ENCODE measurements at regions of chr12 and their contacts with region 1.

Region 1: DNA sequence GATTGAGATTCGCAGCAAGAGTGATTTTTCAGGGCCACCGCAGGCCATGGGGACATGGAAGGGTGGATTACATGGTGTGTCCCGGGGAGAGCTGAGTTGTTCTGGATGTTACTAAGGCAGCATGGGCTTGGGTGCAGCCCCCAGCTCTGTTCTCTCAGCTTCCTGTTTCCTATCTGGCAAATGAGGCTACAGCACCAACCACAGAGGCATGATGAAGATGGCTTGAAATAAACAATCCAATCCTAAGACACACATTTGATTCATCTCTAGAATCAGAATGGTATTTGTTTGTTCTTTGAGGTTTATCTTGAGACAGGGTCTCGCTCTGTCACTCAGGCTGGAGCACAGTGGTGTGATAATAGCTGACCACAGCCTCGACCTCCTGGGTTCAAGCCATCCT is 21.6 kb downstream of the GLTP start:
- DNase-seq: no peak
- H3K4me3 Mint-ChIP-seq: no peak overlapping the region
- H3K27ac Mint-ChIP-seq: no peak overlapping the region
- H3K4me1 Mint-ChIP-seq: peaks cover 14% of the 10 kb centered on the region
- H3K27me3 Mint-ChIP-seq: no peaks in the 10 kb centered on the region

Region 2: GRCh38 chr12:109782326-109782703 is 76.4 kb before region 1 on chr12:
- CTCF ChIA-PET with region 1: no interaction called
- DNase-seq: no peak
- H3K4me3 Mint-ChIP-seq: no peak overlapping the region
- H3K27ac Mint-ChIP-seq: no peak overlapping the region
- H3K4me1 Mint-ChIP-seq: peaks cover 4% of the 10 kb centered on the region
- H3K27me3 Mint-ChIP-seq: peaks cover 8% of the 10 kb centered on the region

Region 3: GRCh38 chr12:109927622-109928021 is 68.9 kb after region 1 on chr12:
- CTCF ChIA-PET with region 1: interaction called, 29 read pairs
- DNase-seq: peak; percentile 60
- H3K4me3 Mint-ChIP-seq: no peak overlapping the region
- H3K27ac Mint-ChIP-seq: peak overlapping the region; percentile 13
- H3K4me1 Mint-ChIP-seq: no peaks in the 10 kb centered on the region
- H3K27me3 Mint-ChIP-seq: no peaks in the 10 kb centered on the region

Region 4: DNA sequence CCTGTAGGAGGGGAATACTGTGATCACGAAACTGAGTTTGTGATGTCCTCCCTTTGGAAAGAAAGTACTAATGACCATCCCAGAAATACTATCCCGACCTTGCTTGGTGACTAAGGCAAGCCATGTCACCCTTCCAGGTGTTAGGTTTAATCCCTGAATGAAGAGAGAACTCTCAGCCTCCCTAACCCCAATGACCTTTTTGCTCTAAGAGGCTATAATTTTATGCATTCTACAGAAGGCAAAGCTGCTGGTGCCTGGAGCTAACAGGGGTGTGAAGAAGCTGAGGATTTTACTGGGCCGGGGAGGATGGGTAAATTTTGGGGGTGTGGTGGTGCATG is 197.4 kb after region 1 on chr12:
- CTCF ChIA-PET with region 1: no interaction called
- DNase-seq: no peak
- H3K4me3 Mint-ChIP-seq: no peak overlapping the region
- H3K27ac Mint-ChIP-seq: no peak overlapping the region
- H3K4me1 Mint-ChIP-seq: peaks cover 23% of the 10 kb centered on the region
- H3K27me3 Mint-ChIP-seq: peaks cover 5% of the 10 kb centered on the region